ENCODE measurements at regions of chr7 and their contacts with region 1.

Region 1: DNA sequence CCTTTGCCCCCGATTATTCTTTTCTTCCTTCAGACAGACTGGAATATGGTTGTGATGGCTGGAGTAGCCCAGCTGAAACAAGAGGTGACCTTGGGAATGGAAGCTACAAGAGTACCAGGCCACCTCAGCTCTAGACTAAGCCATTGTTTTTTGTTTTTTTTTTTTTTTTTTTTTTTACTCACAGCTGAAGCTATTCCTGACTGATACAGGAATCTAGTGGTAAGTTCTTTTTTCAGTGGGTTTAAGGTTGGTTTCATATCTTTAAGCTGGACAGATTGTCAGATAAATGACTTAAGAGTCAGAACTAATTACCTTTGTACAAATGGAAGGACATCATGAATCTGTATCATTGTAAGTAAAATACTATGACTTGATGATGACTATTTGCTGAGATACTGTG is 30.2 kb upstream of the PTPN12 start:
- DNase-seq: no peak
- ATAC-seq: no peak
- H3K4me3 ChIP-seq: no peak overlapping the region
- H3K4me3 Mint-ChIP-seq: no peak overlapping the region
- H3K27ac ChIP-seq: no peak overlapping the region
- H3K27ac Mint-ChIP-seq: no peak overlapping the region
- H3K4me1 ChIP-seq: no peaks in the 10 kb centered on the region
- H3K4me1 Mint-ChIP-seq: no peaks in the 10 kb centered on the region
- H3K27me3 ChIP-seq: peaks cover 0 to 4% of the 10 kb centered on the region in 2 experiments
- H3K27me3 Mint-ChIP-seq: peaks cover 0 to 3% of the 10 kb centered on the region in 2 donors

Region 2: DNA sequence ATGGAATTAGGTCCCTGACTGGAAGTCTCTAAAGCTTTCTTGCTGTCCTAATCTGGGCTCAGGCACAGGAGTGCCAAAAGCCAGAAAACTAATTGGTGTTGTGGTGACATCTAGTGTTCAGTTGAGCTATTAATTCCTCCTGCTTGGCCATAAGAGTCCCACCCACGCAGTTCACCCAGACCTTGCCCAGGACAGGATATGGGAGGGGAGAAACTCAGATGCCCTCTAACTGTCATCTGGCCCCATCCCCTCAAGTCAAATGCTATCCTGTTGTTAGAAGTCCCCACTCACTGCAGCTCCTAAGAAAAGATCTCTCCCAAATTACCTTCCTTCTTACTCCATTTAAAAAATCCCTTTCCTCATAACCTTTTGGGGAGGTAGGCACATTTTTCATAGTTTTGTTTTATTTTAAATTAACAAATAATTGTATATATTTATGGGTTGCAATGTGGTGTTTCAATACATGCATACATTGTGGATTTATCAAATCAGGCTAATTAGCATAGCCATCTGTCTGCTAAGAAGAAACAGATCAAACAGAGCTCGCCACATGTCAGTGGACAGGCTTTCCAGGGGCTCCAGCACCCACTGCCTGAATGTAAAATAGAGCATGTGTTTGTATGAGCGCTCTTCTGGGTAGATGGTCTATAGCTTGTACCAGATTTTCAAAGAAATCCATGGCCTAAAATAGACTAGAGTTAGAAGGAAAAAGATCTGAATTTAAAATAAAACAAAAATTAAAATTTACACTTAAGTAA is 174.8 kb before region 1 on chr7:
- CTCF ChIA-PET with region 1: no interaction called
- POLR2A ChIA-PET with region 1: no interaction called
- DNase-seq: peak in 23 of 35 experiments; percentile 4 to 79 (median 14)
- ATAC-seq: peak; percentile 75 to 84 (median 78)
- H3K4me3 ChIP-seq: no peak overlapping the region
- H3K4me3 Mint-ChIP-seq: no peak overlapping the region
- H3K27ac ChIP-seq: no peak overlapping the region
- H3K27ac Mint-ChIP-seq: peak overlapping the region in 1 of 2 donors; percentile 9
- H3K4me1 ChIP-seq: peaks cover 29% of the 10 kb centered on the region in 2 experiments
- H3K4me1 Mint-ChIP-seq: peaks cover 41 to 52% (median 41%) of the 10 kb centered on the region in 3 donors
- H3K27me3 ChIP-seq: no peaks in the 10 kb centered on the region
- H3K27me3 Mint-ChIP-seq: no peaks in the 10 kb centered on the region

Region 3: GRCh38 chr7:77566421-77566820 is 59.5 kb after region 1 on chr7:
- CTCF ChIA-PET with region 1: no interaction called
- POLR2A ChIA-PET with region 1: interaction called in 1 of 2 experiments, 11 read pairs
- DNase-seq: no peak
- ATAC-seq: no peak
- H3K4me3 ChIP-seq: no peak overlapping the region
- H3K4me3 Mint-ChIP-seq: no peak overlapping the region
- H3K27ac ChIP-seq: no peak overlapping the region
- H3K27ac Mint-ChIP-seq: no peak overlapping the region
- H3K4me1 ChIP-seq: peaks cover 0 to 9% of the 10 kb centered on the region in 2 experiments
- H3K4me1 Mint-ChIP-seq: peaks cover 0 to 18% (median 10%) of the 10 kb centered on the region in 3 donors
- H3K27me3 ChIP-seq: no peaks in the 10 kb centered on the region
- H3K27me3 Mint-ChIP-seq: no peaks in the 10 kb centered on the region

Region 4: DNA sequence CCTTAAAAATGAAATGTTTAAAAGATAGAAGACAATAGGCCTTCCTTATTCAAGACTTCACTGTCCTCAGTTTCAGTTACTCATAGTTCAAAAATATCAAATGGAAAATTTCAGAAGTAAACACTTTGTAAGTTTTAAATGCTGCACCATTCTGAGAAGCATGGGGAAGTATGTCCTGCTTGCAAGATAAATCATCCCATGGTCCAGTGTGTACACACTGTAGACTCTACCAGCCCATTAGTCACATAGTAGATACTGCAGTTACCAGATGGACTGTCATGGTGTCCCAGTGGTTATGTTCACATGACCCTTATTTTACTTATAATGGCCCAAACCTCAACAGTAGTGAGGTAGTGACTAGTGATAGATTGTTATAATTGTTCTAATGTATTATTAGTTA is 99.7 kb after region 1 on chr7:
- CTCF ChIA-PET with region 1: no interaction called
- POLR2A ChIA-PET with region 1: no interaction called
- DNase-seq: no peak
- ATAC-seq: no peak
- H3K4me3 ChIP-seq: no peak overlapping the region
- H3K4me3 Mint-ChIP-seq: no peak overlapping the region
- H3K27ac ChIP-seq: no peak overlapping the region
- H3K27ac Mint-ChIP-seq: no peak overlapping the region
- H3K4me1 ChIP-seq: no peaks in the 10 kb centered on the region
- H3K4me1 Mint-ChIP-seq: no peaks in the 10 kb centered on the region
- H3K27me3 ChIP-seq: no peaks in the 10 kb centered on the region
- H3K27me3 Mint-ChIP-seq: no peaks in the 10 kb centered on the region

Measured in T-cell (primary cell).